WTC11 (cell line): ENCODE measurements at regions of chr3 and their contacts with region 1.

Region 1: GRCh38 chr3:46998121-46998851 is 18.8 kb downstream of the NBEAL2 start:
- DNase-seq: peak; percentile 93
- ATAC-seq: peak; percentile 86
- H3K4me3 Mint-ChIP-seq: no peak overlapping the region
- H3K27ac Mint-ChIP-seq: peak overlapping the region; percentile 94
- H3K4me1 Mint-ChIP-seq: peaks cover 3% of the 10 kb centered on the region
- H3K27me3 Mint-ChIP-seq: no peaks in the 10 kb centered on the region
- CTCF ChIP-seq: peak; percentile 87

Region 2: DNA sequence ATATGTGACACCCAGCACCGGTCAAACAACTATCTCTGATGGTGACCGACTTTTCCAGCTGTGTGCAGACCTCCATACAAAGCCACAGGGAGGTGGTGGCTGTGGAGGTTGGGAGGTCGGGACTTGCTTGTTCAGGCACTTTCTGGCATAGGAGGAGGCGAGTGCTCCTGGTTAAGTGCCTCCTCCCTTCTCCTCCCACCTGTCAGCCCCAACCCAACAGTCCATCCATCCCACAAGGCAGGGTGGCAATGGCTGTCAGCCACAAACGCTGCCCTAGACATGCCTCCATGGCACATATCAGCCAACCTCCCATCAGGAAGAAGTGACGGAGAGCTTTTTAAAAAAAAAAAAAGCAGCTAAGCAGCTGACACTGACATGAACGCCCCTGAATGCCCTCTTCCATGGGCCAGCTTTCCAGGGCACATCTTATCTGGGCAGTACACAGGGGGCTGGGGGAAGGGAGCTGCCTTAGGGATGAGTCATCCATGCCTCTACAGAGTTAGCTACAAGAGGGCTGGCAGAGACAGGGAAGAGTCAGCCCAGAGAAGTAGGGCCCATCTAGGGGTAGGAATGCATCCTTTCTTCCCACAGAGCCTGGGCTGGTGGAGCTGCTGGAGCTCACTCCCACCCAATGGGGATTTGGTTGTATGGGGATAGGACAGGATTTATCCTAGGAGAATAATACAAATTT is 63.0 kb before region 1 on chr3:
- CTCF ChIA-PET with region 1: interaction called, 18 read pairs
- POLR2A ChIA-PET with region 1: interaction called, 3 read pairs
- DNase-seq: peak; percentile 62
- ATAC-seq: peak; percentile 95
- H3K4me3 Mint-ChIP-seq: no peak overlapping the region
- H3K27ac Mint-ChIP-seq: peak overlapping the region; percentile 91; the same call in 1 of the 2 replicates
- H3K4me1 Mint-ChIP-seq: peaks cover 31% of the 10 kb centered on the region
- H3K27me3 Mint-ChIP-seq: no peaks in the 10 kb centered on the region
- CTCF ChIP-seq: no peak

Region 3: DNA sequence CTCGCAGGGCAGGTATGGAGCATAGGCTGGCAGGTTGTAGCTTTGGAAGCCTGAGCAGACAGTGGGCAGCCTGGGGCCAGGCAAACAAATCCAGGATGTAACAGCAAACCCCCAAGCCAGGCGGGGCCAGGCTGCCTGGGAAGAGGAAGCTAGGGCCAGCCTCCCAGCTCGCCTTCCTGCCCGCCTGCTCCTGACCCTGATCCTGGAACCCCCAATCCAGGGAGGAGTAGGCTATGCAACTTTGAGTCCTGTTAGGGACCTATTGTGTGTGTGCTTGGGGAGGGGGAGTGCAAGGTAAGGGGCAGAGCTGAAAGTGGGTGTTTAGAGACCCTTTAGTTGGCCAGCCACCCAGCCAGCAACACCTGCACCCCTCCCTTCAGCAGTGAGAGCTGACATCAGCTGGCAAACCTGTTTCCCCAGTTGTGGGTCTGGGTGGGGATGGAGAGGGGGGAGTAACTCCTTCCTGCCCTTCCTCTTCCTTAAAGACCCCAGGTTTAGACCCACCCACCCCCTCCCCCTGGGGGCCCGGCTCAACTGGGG is 16.3 kb before region 1 on chr3:
- CTCF ChIA-PET with region 1: interaction called, 21 read pairs
- POLR2A ChIA-PET with region 1: interaction called, 3 read pairs
- DNase-seq: peak; percentile 64
- ATAC-seq: peak; percentile 8
- H3K4me3 Mint-ChIP-seq: peak overlapping the region; percentile 51
- H3K27ac Mint-ChIP-seq: no peak overlapping the region
- H3K4me1 Mint-ChIP-seq: peaks cover 36% of the 10 kb centered on the region
- H3K27me3 Mint-ChIP-seq: peaks cover 5% of the 10 kb centered on the region
- CTCF ChIP-seq: no peak

Region 4: DNA sequence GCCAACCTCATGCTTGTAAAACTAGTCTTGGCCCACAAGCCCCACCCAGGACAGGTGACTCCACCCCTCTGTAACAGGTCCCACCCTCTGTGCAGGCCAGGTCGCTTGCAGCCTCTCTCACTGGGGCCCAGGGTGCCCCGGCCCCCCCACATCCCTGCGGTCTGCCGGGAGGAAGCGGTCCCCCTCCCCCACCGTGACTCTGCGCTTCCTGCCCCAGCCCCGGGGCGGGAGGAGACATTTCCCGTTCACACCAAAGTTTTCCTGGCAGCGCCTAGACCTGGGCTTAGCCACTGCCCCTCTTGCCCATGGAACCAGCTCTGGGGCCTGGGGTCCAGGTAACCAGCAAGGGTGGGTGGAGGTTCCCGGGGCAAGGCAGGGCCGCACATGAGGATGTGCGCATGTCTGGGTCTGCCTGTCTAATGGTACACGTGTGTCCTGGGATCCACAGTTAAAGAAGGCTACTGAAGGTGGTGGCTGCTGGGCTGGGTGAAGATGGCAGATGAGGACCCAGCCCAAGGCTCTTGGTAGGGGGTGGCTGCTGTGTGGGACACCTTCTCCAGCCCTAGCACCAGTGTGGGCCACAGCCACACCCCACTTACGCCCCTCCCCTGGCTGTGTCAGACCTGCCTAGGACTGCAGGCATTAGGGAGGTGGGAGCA is 10.4 kb before region 1 on chr3:
- CTCF ChIA-PET with region 1: interaction called, 21 read pairs
- POLR2A ChIA-PET with region 1: no interaction called
- DNase-seq: peak; percentile 66
- ATAC-seq: peak; percentile 85
- H3K4me3 Mint-ChIP-seq: no peak overlapping the region
- H3K27ac Mint-ChIP-seq: no peak overlapping the region
- H3K4me1 Mint-ChIP-seq: peaks cover 32% of the 10 kb centered on the region
- H3K27me3 Mint-ChIP-seq: no peaks in the 10 kb centered on the region
- CTCF ChIP-seq: no peak

Region 5: DNA sequence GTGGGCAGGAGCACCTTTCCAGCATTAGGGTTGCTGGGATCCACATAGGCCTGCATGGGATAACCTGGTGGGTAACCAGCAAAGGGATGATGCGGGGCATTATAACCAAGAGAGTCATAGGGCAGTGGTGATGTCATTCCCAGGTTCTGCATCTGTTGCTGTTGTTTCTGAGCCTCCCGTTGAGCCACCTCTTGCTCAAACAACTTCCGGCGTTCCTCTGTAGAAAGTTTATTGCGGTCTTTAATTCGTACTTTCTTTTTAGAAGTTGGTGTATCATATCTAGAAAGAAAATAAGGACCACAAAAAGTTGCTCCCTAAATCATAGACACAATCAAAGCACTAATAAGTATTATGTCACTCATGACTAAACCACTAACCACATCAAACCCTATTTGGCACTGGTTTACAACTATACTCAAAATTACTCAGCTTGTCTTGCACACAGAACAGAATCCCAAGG is 59.0 kb after region 1 on chr3:
- CTCF ChIA-PET with region 1: no interaction called
- POLR2A ChIA-PET with region 1: no interaction called
- DNase-seq: no peak
- ATAC-seq: no peak
- H3K4me3 Mint-ChIP-seq: no peak overlapping the region
- H3K27ac Mint-ChIP-seq: no peak overlapping the region
- H3K4me1 Mint-ChIP-seq: no peaks in the 10 kb centered on the region
- H3K27me3 Mint-ChIP-seq: no peaks in the 10 kb centered on the region
- CTCF ChIP-seq: no peak